Cardiac septum (tissue), 1 donor: ENCODE measurements at regions of chr1 and their contacts with region 1.

Region 1: GRCh38 chr1:26169669-26170471 is at the start of gene ZNF593:
- DNase-seq: peak; percentile 96
- total RNA-seq, gene ZNF593: 23.2 TPM

Region 2: GRCh38 chr1:26233903-26234643 is 64.2 kb after region 1 on chr1 and contains the start of gene CEP85:
- intact Hi-C with region 1: loop called (anchors 5 kb)
- DNase-seq: peak; percentile 100
- total RNA-seq, gene CEP85: 25.8 TPM

Region 3: DNA sequence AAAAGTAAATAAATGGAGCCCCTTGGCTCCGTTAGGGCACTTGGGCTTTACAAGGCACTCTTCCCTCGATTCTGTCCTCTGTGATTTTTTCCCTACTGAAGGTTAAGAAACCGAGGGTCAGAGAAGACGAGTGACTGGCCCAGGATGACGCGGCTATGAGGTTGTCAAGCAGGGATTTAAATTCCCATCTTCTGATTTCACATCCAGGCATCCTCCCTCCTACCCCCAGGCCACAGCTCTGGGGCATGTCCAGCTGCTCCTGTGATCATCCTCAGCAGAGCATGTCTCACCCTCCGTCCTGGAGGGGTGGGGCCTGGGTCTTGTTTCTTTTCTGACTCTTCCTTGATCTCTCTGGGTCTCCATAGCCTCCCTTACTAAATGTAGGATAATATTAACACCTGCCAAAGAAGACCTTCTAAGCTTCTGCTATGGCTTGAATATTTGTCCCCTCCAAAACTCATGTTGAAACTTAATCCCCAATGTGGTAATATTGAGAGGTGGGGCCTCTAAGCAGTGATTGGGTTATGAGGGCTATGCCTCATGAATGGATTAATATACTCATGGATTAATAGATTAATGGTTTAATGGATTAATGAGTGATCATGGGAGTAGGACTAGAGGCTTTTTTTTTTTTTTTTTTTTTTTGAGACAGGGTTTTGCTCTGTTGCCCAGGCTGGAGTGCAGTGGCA is 179.5 kb after region 1 on chr1:
- intact Hi-C with region 1: no loop called
- DNase-seq: no peak